Motor neuron (in vitro differentiated cells): ENCODE measurements at regions of chr6 and their contacts with region 1.

Region 1: DNA sequence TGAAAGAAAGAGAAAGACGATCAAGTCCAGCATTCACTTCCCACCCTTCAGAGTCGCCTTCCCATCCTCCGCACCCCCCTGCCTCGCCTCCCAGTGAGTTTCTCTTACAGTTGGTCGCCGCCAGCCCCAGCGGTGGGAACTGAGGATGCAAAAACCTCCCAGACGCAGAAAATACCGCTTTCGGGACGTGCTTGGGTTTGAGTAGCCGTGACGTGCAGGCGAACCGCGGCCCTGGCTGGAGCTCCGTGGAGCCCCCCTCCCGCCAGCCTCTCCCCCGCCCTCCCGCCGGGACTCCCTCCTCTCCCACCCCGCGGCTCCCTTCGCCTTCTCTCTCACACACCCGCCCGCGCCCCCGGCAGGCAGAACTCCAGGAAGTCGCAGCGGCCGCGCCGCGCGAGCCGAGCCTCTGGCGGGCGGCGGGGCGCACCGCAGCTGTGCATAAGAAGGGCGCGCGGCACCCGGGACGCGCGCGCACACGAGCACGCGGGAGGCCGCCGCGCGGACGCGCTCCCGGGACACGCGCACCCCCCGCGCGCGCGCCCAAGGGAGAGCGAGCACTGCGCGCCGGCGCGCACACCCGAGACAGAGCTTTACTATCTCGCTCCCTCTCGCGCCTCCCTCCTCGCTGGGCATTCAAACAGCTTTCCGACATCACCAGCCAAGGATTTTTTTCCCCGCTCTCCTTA is at the start of gene ADGRB3:
- ATAC-seq: peak; percentile 83 to 92 (median 90)
- H3K4me3 ChIP-seq: peak within 1 kb of the TSS; percentile 46 to 63 (median 56)
- H3K27ac ChIP-seq: peak within 1 kb of the TSS; percentile 76 to 79
- H3K4me1 ChIP-seq: peaks cover 8 to 20% of the 10 kb centered on the region in 2 donors
- total RNA-seq, gene ADGRB3: 0.05 to 48.0 (median 24.2) TPM

Region 2: DNA sequence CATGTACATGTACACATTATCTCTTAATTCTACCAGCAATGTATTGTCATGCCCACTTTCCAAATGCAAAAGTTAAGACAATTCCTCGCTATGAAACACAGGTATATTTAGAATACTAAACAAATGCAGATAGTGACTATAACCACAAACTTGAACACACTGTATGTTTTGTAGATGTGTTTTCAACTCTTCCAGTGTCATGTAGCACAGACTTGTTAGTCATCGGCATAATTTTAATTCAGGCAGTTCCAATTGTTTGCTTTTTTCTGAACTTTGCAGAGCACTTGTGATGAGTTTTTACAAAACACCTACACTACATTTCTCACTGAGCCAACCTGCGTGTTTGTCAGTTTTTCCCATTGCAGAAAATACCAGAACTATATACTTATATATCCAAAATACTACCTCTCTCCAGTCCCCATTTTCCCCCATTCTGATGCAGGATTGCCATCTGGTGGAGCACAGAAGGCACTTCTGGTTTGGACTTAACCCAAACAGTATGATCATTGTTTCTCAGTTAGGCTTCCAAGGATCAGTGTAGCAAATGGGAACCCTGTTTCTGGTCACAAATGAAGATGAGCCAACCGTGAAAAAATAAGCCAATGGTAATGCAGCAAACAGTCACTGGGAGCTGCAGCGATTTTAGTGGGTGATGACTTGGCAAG is 143.6 kb after region 1 on chr6:
- in situ Hi-C with region 1: loop called in 3 of 9 experiments (anchors 10 kb)
- ATAC-seq: peak; percentile 53 to 78 (median 64)
- H3K4me3 ChIP-seq: no peak overlapping the region
- H3K27ac ChIP-seq: no peak overlapping the region
- H3K4me1 ChIP-seq: peaks cover 7 to 25% of the 10 kb centered on the region in 2 donors

Region 3: GRCh38 chr6:68967549-68968300 is 332.9 kb after region 1 on chr6:
- in situ Hi-C with region 1: loop called in 2 of 9 experiments (anchors 25 kb)
- ATAC-seq: peak; percentile 23 to 72 (median 56)
- H3K4me3 ChIP-seq: no peak overlapping the region
- H3K27ac ChIP-seq: no peak overlapping the region
- H3K4me1 ChIP-seq: peaks cover 4 to 5% of the 10 kb centered on the region in 2 donors